ENCODE measurements at regions of chr16 and their contacts with region 1.

Region 1: DNA sequence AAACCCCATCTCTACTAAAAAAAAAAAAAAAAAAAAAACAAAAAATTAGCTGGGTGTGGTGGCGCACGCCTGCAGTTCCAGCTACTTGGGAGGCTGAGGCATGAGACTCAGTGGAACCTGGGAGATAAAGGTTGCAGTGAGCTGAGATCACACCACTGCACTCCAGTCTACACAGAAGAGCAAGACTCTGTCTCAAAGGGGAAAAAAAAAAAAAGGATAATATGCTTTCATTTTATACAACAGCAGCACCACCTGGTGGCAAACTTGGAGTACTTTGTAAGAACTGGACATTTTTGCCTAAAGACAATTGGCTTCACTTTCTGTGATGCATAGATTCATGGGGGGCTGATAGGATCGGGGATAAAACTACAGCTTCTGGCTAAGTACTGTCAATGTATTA is 8.5 kb downstream of the CHTF8 start:
- DNase-seq: peak; percentile 51
- H3K4me3 ChIP-seq: no peak overlapping the region
- H3K27ac ChIP-seq: no peak overlapping the region
- H3K27me3 ChIP-seq: no peaks in the 10 kb centered on the region
- CTCF ChIP-seq: peak; percentile 72

Region 2: DNA sequence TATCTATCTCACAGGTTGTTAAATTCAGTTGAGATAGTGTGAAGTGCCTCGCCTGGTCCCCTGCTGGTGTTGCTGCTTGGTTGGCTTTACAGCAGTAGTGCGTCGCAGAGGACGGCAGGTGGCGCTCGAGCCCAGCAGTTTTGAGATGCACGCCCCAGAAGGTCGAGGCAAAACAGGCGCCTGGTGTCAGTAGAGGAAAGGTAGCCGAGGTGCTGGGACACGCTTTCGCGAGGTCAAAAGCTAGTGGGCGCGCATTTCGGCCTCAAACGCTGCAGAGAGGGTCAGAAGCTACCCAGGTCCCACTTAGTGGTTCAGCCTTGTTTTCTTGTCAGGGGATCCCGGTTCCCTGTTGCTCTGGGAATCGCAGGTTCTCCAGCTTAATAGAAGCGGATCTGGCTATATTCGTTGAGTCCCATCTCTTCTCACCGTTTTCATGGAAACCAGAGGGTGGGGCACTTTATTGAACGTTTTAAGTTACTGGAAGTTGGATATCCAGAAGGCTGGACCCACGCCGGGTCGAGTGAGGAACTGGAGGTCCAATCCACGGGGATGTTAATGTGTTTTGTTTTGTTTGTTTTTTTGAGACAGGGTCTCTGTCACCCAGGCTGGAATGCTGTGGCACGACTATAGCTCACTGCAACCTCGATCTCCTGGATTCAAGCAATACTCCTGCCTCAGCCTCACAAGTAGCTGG is 595.1 kb before region 1 on chr16:
- CTCF ChIA-PET with region 1: interaction called, 37 read pairs
- POLR2A ChIA-PET with region 1: no interaction called
- DNase-seq: peak; percentile 44
- H3K4me3 ChIP-seq: no peak overlapping the region
- H3K27ac ChIP-seq: no peak overlapping the region
- H3K27me3 ChIP-seq: no peaks in the 10 kb centered on the region
- CTCF ChIP-seq: peak; percentile 83

Region 3: GRCh38 chr16:68848786-68849185 is 275.1 kb before region 1 on chr16:
- CTCF ChIA-PET with region 1: interaction called, 182 read pairs
- POLR2A ChIA-PET with region 1: interaction called, 3 read pairs
- DNase-seq: no peak
- H3K4me3 ChIP-seq: no peak overlapping the region
- H3K27ac ChIP-seq: no peak overlapping the region
- H3K27me3 ChIP-seq: no peaks in the 10 kb centered on the region
- CTCF ChIP-seq: no peak

Region 4: GRCh38 chr16:68902008-68902968 is 221.6 kb before region 1 on chr16:
- CTCF ChIA-PET with region 1: interaction called, 104 read pairs
- POLR2A ChIA-PET with region 1: no interaction called
- DNase-seq: peak; percentile 37
- H3K4me3 ChIP-seq: no peak overlapping the region
- H3K27ac ChIP-seq: no peak overlapping the region
- H3K27me3 ChIP-seq: no peaks in the 10 kb centered on the region
- CTCF ChIP-seq: peak; percentile 81

Region 5: DNA sequence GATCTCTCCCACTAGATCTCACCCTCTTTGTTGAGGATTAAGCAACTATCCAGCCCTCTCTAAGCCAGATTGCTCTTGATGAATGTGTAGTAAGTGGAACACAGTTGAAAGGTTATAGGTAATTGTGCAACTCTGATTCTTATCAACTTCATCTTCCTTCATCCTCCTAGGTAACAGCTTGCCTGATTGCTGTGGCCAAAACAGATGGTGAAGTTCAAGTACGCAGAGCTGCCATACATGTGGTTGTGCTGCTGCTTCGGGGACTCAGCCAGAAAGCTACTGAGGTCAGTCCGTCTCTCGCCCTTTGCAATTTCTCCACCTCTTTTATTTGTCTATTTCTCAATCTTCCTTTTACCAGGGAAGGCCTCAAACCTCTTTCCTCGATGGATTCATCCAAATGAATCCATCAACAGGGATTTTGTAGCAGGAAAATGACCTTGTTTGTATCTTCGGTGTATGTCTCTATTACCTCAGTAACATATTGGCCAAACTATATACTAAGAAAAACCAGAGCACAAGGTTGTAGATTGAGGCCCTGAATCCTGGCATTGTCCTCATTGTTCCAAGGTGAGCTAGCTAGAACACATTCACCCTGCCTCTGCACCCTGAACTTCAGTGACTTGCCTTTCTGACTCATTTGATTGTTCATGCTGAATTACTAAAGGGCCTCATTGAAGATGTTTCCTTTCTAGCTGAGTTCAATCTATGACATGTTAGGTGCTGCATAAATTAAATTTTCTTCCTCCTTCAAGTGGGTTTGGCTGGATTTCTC is 83.6 kb before region 1 on chr16:
- CTCF ChIA-PET with region 1: no interaction called
- POLR2A ChIA-PET with region 1: no interaction called
- DNase-seq: no peak
- H3K4me3 ChIP-seq: no peak overlapping the region
- H3K27ac ChIP-seq: no peak overlapping the region
- H3K27me3 ChIP-seq: no peaks in the 10 kb centered on the region
- CTCF ChIP-seq: no peak

Region 6: DNA sequence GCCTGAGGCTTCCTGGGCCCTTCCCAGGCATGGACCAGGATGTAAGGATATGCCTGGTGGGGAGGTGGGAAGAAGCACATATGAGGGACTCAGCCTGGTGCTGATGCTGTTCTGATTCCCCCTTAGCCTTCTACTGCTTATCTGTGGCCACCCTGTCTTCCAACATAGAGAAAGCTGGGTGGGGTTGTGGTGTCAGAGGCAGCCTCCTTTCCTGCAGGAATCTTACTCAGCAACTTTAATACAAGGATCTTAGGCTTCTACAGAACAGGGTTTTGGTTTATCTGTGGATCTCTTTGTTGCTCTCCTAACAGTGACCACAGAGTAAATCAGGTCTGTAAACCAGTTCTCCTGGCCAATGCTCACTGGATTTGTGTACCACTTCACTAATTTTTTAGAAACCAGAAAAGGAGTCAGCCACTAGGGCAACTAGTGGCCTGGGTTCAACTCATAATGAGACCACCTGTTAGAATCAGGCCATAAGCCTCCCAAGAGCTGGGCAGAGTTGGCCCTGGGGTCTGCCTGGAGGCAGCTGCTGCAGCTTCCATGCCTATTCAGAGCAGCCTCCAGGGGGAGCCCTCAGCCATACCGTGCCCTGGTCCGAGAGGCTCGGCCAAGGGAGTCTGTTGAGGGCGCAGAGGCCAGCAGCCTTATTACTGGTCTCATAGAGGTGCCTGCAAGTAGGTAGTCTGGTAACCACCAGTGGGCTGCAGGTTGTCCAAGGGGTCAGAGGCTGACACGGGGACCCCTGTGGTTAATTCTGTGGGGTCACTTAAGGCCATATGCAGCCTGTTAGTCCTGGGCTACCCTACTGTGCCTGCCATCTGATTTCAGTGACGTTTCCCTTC is 11.4 kb before region 1 on chr16:
- CTCF ChIA-PET with region 1: interaction called, 60 read pairs
- POLR2A ChIA-PET with region 1: no interaction called
- DNase-seq: no peak
- H3K4me3 ChIP-seq: no peak overlapping the region
- H3K27ac ChIP-seq: no peak overlapping the region
- H3K27me3 ChIP-seq: peaks cover 2% of the 10 kb centered on the region
- CTCF ChIP-seq: peak; percentile 81

Region 7: GRCh38 chr16:69698404-69698803 is 574.5 kb after region 1 on chr16:
- CTCF ChIA-PET with region 1: interaction called, 11 read pairs
- POLR2A ChIA-PET with region 1: no interaction called
- DNase-seq: no peak
- H3K4me3 ChIP-seq: no peak overlapping the region
- H3K27ac ChIP-seq: no peak overlapping the region
- H3K27me3 ChIP-seq: no peaks in the 10 kb centered on the region
- CTCF ChIP-seq: no peak

Measured in AG04450 (cell line).